A673 (cell line): ENCODE measurements at regions of chr1 and their contacts with region 1.

Region 1: DNA sequence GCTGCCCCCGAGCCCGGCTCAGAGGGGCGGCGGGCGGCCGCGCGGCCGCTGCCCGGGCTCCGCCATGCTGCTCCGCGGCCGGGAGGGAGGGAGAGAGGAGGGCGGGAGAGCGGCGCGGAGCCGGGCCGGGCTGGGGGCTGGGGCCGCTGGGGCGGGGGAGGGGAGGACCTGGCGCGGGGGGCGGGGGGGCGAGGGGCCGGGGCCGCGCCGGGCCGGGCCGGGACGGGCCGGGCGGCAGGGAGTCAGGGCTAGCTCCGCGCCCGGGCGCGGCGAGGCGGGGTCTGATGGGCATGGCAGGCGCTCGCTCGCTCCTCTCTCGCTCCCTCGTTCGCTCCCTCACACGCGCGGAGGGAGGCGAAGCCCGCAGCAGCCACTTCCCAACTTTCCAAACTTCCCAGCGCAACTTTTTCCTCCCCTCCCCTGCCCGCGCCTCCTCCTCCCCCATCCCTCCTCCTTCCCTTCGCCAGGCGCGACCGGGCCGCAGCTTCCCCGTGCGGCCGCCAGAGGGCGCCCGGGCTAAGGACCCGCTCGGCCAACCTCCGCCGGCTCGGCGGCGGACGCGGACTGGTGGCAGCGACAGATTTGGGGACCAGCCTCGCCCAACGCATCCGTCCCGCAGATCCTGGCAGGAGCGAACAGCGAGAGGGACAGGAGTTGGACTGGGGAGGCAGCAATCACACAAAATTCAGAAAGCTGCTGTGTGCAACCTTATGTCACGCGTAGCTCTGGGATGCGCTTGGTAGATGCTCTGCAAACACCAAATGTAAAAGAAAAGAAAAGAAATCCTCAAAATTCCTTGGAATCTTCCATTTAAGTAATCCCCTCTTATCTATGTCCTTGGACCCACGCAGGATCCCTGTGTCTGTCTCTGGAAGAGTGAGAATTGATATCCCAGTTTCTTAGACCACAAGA is at the start of gene TRABD2B:
- DNase-seq: peak; percentile 77
- H3K4me3 ChIP-seq: peak within 1 kb of the TSS; percentile 41
- H3K27ac ChIP-seq: no peak within 1 kb of the TSS
- H3K4me1 ChIP-seq: peaks cover 17% of the 10 kb centered on the region
- H3K27me3 ChIP-seq: peaks cover 72% of the 10 kb centered on the region
- CTCF ChIP-seq: peak; percentile 91
- total RNA-seq, gene TRABD2B: not detected in 2 replicates

Region 2: DNA sequence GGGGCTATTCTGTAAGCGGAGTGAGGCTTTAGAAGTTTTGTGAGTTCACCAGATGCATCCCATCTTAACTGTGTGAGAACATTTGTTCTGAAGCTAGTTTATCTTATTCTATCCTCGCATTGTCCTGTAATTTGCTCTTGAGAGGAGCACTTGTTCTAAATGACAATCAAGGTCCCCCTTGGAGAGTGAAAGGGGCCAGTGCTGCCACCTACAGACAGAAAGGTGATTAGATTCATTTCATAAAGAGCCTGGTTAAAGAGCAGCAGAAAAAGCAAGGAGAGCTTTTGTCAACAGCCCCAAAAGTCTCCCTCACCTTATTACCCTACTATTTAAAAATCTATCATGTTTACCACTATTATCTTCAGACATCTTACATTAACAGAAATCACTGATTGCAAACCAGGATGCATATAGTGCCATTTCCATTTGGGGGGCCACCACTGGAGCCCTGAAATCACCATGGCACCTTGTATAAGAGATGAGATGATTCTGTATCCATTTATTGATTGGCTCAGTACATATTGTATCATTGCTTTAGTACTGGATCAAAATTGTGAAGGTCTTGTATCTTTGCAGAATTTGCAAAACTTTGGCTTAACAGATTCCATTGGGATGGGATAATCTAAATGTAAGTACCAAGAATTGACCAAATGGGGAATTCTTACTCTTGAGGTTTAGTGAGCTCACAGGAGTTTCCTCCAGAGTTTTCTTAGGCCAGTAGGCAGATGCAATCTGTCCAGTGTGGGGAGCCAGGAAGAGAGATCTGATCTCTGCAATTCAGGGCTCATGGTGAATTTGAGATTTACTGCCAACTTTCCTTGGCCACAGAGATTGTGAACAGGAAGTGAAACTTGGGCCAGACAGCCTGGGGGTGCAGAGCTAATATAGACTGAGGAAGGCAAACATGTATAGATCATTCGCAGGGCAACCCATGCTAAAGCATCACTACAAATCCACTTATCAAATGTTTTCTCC is 63.9 kb after region 1 on chr1:
- CTCF ChIA-PET with region 1: interaction called, 18 read pairs
- POLR2A ChIA-PET with region 1: no interaction called
- intact Hi-C with region 1: loop called (anchors 1 kb)
- DNase-seq: peak; percentile 82
- H3K4me3 ChIP-seq: no peak overlapping the region
- H3K27ac ChIP-seq: no peak overlapping the region
- H3K4me1 ChIP-seq: peaks cover 5% of the 10 kb centered on the region
- H3K27me3 ChIP-seq: peaks cover 33% of the 10 kb centered on the region
- CTCF ChIP-seq: peak; percentile 77

Region 3: GRCh38 chr1:49060766-49061165 is 1063.2 kb after region 1 on chr1:
- CTCF ChIA-PET with region 1: no interaction called
- POLR2A ChIA-PET with region 1: no interaction called
- intact Hi-C with region 1: no loop called
- DNase-seq: peak; percentile 81
- H3K4me3 ChIP-seq: no peak overlapping the region
- H3K27ac ChIP-seq: no peak overlapping the region
- H3K4me1 ChIP-seq: no peaks in the 10 kb centered on the region
- H3K27me3 ChIP-seq: no peaks in the 10 kb centered on the region
- CTCF ChIP-seq: no peak